CD4-positive, alpha-beta memory T cell (primary cell): ENCODE measurements at regions of chr3 and their contacts with region 1.

Region 1: GRCh38 chr3:134212906-134213665 is 37.6 kb downstream of the RYK start:
- DNase-seq: peak; percentile 67 to 78 (median 73)
- H3K4me3 ChIP-seq: no peak overlapping the region
- H3K4me3 Mint-ChIP-seq: no peak overlapping the region
- H3K27ac ChIP-seq: no peak overlapping the region
- H3K27ac Mint-ChIP-seq: peak overlapping the region in 6 of 7 donors; percentile 5 to 84 (median 38)
- H3K4me1 ChIP-seq: no peaks in the 10 kb centered on the region
- H3K4me1 Mint-ChIP-seq: peaks cover 15 to 28% (median 25%) of the 10 kb centered on the region in 4 donors
- H3K27me3 ChIP-seq: no peaks in the 10 kb centered on the region
- H3K27me3 Mint-ChIP-seq: no peaks in the 10 kb centered on the region

Region 2: DNA sequence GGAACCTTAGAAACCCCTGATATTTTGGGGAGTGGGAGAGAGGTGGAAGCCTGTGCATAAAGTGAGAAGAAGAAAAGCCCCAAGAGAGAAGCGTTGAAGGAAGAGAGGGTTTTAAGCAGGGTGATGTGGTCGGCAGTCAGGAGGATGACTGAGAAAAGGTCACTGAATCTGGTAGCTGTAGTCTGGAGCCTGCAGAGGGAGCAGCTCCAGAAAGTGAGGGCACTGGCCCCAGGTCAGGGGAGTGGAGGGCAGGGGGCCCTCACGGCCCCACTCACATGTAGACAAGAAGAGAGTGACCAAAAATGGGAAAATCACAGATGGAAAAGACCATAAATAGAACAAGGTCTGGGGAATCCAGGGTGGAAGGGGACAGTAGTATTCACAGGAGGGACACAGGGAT is 67.9 kb before region 1 on chr3:
- CTCF ChIA-PET with region 1: no interaction called
- POLR2A ChIA-PET with region 1: no interaction called
- intact Hi-C with region 1: no loop called
- DNase-seq: no peak
- H3K4me3 ChIP-seq: no peak overlapping the region
- H3K4me3 Mint-ChIP-seq: no peak overlapping the region
- H3K27ac ChIP-seq: no peak overlapping the region
- H3K27ac Mint-ChIP-seq: peak overlapping the region in 1 of 7 donors; percentile 22
- H3K4me1 ChIP-seq: no peaks in the 10 kb centered on the region
- H3K4me1 Mint-ChIP-seq: peaks cover 0 to 13% (median 5%) of the 10 kb centered on the region in 4 donors
- H3K27me3 ChIP-seq: no peaks in the 10 kb centered on the region
- H3K27me3 Mint-ChIP-seq: no peaks in the 10 kb centered on the region

Region 3: DNA sequence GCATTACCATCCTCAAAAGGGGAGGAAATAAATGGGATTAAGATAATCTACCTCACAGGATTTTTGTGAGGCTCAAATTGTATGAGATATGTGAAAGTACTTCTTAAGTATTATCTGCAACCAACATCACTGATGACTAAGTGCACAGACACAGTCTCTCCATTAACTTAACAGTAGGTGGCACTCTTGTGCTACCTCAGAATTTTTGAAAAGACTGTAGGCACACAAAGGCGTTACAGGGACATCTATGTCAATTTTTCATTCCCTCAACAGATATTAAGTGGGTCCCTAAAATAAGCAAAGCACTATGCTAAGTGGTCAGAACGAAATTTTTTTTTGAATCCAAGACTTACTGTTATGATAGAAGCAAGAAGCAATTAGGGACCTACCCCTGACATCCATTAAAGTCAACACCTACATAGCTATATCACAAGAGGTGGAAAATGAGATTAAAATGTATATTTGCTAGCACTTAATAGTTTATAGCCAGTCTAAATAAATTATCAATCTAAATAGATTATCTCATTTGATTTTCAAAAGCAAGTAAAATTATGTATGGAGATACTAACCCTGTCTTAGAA is 15.3 kb before region 1 on chr3:
- CTCF ChIA-PET with region 1: interaction called, 75 read pairs
- POLR2A ChIA-PET with region 1: no interaction called
- intact Hi-C with region 1: loop called (anchors 2 kb)
- DNase-seq: peak in 4 of 5 donors; percentile 39 to 49 (median 44)
- H3K4me3 ChIP-seq: no peak overlapping the region
- H3K4me3 Mint-ChIP-seq: no peak overlapping the region
- H3K27ac ChIP-seq: no peak overlapping the region
- H3K27ac Mint-ChIP-seq: no peak overlapping the region
- H3K4me1 ChIP-seq: no peaks in the 10 kb centered on the region
- H3K4me1 Mint-ChIP-seq: peaks cover 0 to 6% (median 1%) of the 10 kb centered on the region in 4 donors
- H3K27me3 ChIP-seq: no peaks in the 10 kb centered on the region
- H3K27me3 Mint-ChIP-seq: no peaks in the 10 kb centered on the region

Region 4: GRCh38 chr3:134239538-134239937 is 26.5 kb after region 1 on chr3:
- CTCF ChIA-PET with region 1: interaction called, 29 read pairs
- POLR2A ChIA-PET with region 1: no interaction called
- intact Hi-C with region 1: no loop called
- DNase-seq: no peak
- H3K4me3 ChIP-seq: no peak overlapping the region
- H3K4me3 Mint-ChIP-seq: peak overlapping the region in 2 of 8 donors; percentile 37 to 56
- H3K27ac ChIP-seq: no peak overlapping the region
- H3K27ac Mint-ChIP-seq: peak overlapping the region in 3 of 7 donors; percentile 3 to 68 (median 26)
- H3K4me1 ChIP-seq: peaks cover 61% of the 10 kb centered on the region
- H3K4me1 Mint-ChIP-seq: peaks cover 58 to 87% (median 72%) of the 10 kb centered on the region in 4 donors
- H3K27me3 ChIP-seq: no peaks in the 10 kb centered on the region
- H3K27me3 Mint-ChIP-seq: no peaks in the 10 kb centered on the region

Region 5: DNA sequence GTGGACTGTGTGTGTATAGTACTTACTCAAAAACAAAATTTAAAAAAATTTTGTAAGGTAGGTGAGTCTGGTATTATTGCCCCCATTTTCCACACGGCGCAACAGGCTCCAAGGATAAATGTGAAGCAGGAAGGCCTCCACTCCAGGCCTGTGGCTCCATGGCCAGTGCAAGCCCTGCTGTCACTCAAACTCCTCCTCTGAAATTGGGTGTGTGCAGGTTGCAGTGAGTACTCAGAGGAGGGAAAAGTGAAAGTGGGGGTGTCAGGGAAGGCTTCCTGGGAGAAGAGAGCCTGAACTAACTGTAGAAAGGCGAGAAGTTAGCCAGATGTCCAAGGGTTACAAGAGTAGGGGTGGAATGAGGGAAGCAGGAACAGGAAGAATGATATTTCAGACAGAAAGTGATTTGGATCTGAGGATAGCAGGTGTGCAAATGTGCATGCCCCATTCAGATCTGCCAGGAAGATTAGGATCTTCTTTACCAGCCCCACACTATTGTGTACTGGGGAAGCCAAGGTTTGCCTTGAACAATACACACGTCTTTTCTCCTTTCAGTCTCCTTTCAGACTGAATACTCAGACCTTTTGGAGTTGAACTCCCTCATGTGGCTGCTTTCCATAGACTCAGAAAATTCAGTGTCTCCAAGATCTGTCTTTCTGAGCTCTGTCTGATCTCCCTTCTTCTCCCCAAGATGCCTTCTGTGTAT is 86.2 kb after region 1 on chr3:
- CTCF ChIA-PET with region 1: interaction called, 13 read pairs
- POLR2A ChIA-PET with region 1: no interaction called
- intact Hi-C with region 1: loop called (anchors 1 kb)
- DNase-seq: no peak
- H3K4me3 ChIP-seq: no peak overlapping the region
- H3K4me3 Mint-ChIP-seq: no peak overlapping the region
- H3K27ac ChIP-seq: no peak overlapping the region
- H3K27ac Mint-ChIP-seq: no peak overlapping the region
- H3K4me1 ChIP-seq: peaks cover 10% of the 10 kb centered on the region
- H3K4me1 Mint-ChIP-seq: no peaks in the 10 kb centered on the region
- H3K27me3 ChIP-seq: no peaks in the 10 kb centered on the region
- H3K27me3 Mint-ChIP-seq: peaks cover 0 to 6% of the 10 kb centered on the region in 2 donors

Region 6: DNA sequence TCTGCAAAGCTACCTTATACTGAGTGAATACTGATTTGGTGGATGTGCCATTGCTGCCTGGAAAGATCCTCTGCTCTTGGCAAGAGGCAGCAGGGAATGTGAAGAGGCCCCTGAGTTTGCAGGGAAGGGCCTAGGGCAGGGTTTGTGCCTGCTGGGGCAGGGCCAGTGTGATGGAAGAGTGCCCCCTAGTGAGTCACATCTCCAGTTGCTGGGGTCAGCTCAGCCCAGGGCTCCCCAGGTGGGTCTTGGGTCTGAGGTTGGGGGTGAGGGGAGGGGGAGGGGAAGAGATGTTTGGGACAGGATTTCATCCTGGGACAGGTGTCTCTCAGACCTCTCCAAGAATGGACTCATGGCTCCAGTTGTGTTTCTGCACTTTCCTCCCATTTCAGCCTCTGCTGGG is 165.3 kb after region 1 on chr3:
- CTCF ChIA-PET with region 1: interaction called, 10 read pairs
- POLR2A ChIA-PET with region 1: interaction called, 3 read pairs
- intact Hi-C with region 1: loop called (anchors 1 kb)
- DNase-seq: peak in 4 of 5 donors; percentile 22 to 32 (median 30)
- H3K4me3 ChIP-seq: no peak overlapping the region
- H3K4me3 Mint-ChIP-seq: no peak overlapping the region
- H3K27ac ChIP-seq: no peak overlapping the region
- H3K27ac Mint-ChIP-seq: no peak overlapping the region
- H3K4me1 ChIP-seq: peaks cover 8% of the 10 kb centered on the region
- H3K4me1 Mint-ChIP-seq: peaks cover 8 to 11% (median 10%) of the 10 kb centered on the region in 4 donors
- H3K27me3 ChIP-seq: peaks cover 10% of the 10 kb centered on the region
- H3K27me3 Mint-ChIP-seq: peaks cover 19 to 25% of the 10 kb centered on the region in 2 donors